CD4-positive, alpha-beta memory T cell (primary cell): ENCODE measurements at regions of chr13 and their contacts with region 1.

Region 1: GRCh38 chr13:29508130-29508875 is 87.2 kb downstream of the SLC7A1 start:
- DNase-seq: peak; percentile 52 to 65 (median 55)
- H3K4me3 ChIP-seq: no peak overlapping the region
- H3K4me3 Mint-ChIP-seq: no peak overlapping the region
- H3K27ac ChIP-seq: no peak overlapping the region
- H3K27ac Mint-ChIP-seq: peak overlapping the region in 1 of 7 donors; percentile 24
- H3K4me1 ChIP-seq: no peaks in the 10 kb centered on the region
- H3K4me1 Mint-ChIP-seq: peaks cover 0 to 4% (median 0%) of the 10 kb centered on the region in 4 donors
- H3K27me3 ChIP-seq: no peaks in the 10 kb centered on the region
- H3K27me3 Mint-ChIP-seq: peaks cover 0 to 6% of the 10 kb centered on the region in 2 donors

Region 2: DNA sequence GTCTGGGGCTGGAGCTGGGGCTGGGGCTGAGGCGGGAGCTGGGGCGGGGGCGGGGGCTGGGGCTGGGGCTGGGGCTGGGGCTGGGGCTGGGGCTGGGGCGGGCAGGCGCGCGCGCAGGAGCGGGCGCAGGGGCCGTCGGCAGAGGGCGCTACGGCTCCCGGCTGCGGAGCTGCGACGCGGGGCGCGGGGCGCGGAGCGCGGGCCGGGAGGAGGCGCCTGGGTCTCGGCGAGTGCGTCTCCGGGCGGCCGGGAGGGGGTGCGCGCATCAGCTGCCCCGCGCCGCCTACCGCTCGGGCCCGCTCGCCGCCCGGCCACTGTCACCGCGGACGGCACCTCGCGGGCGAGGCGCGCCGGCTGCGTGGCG is 688.6 kb before region 1 on chr13:
- CTCF ChIA-PET with region 1: no interaction called
- POLR2A ChIA-PET with region 1: no interaction called
- intact Hi-C with region 1: no loop called
- DNase-seq: peak in 4 of 5 donors; percentile 45 to 60 (median 50)
- H3K4me3 ChIP-seq: no peak overlapping the region
- H3K4me3 Mint-ChIP-seq: no peak overlapping the region
- H3K27ac ChIP-seq: no peak overlapping the region
- H3K27ac Mint-ChIP-seq: no peak overlapping the region
- H3K4me1 ChIP-seq: peaks cover 5% of the 10 kb centered on the region
- H3K4me1 Mint-ChIP-seq: peaks cover 2 to 7% (median 4%) of the 10 kb centered on the region in 4 donors
- H3K27me3 ChIP-seq: peaks cover 17% of the 10 kb centered on the region
- H3K27me3 Mint-ChIP-seq: peaks cover 36 to 43% of the 10 kb centered on the region in 2 donors

Region 3: GRCh38 chr13:29448174-29448573 is 60.1 kb before region 1 on chr13:
- CTCF ChIA-PET with region 1: no interaction called
- POLR2A ChIA-PET with region 1: no interaction called
- intact Hi-C with region 1: no loop called
- DNase-seq: no peak
- H3K4me3 ChIP-seq: no peak overlapping the region
- H3K4me3 Mint-ChIP-seq: no peak overlapping the region
- H3K27ac ChIP-seq: no peak overlapping the region
- H3K27ac Mint-ChIP-seq: no peak overlapping the region
- H3K4me1 ChIP-seq: no peaks in the 10 kb centered on the region
- H3K4me1 Mint-ChIP-seq: no peaks in the 10 kb centered on the region
- H3K27me3 ChIP-seq: no peaks in the 10 kb centered on the region
- H3K27me3 Mint-ChIP-seq: peaks cover 6 to 16% of the 10 kb centered on the region in 2 donors

Region 4: GRCh38 chr13:29496240-29496712 is 12.0 kb before region 1 on chr13:
- CTCF ChIA-PET with region 1: interaction called, 27 read pairs
- POLR2A ChIA-PET with region 1: no interaction called
- intact Hi-C with region 1: no loop called
- DNase-seq: no peak
- H3K4me3 ChIP-seq: no peak overlapping the region
- H3K4me3 Mint-ChIP-seq: no peak overlapping the region
- H3K27ac ChIP-seq: no peak overlapping the region
- H3K27ac Mint-ChIP-seq: peak overlapping the region in 2 of 7 donors; percentile 5 to 87
- H3K4me1 ChIP-seq: no peaks in the 10 kb centered on the region
- H3K4me1 Mint-ChIP-seq: peaks cover 0 to 8% (median 7%) of the 10 kb centered on the region in 4 donors
- H3K27me3 ChIP-seq: no peaks in the 10 kb centered on the region
- H3K27me3 Mint-ChIP-seq: peaks cover 15 to 17% of the 10 kb centered on the region in 2 donors

Region 5: GRCh38 chr13:29564818-29565217 is 56.5 kb after region 1 on chr13:
- CTCF ChIA-PET with region 1: interaction called, 13 read pairs
- POLR2A ChIA-PET with region 1: no interaction called
- intact Hi-C with region 1: no loop called
- DNase-seq: no peak
- H3K4me3 ChIP-seq: no peak overlapping the region
- H3K4me3 Mint-ChIP-seq: no peak overlapping the region
- H3K27ac ChIP-seq: no peak overlapping the region
- H3K27ac Mint-ChIP-seq: peak overlapping the region in 4 of 7 donors; percentile 4 to 43 (median 24)
- H3K4me1 ChIP-seq: peaks cover 16% of the 10 kb centered on the region
- H3K4me1 Mint-ChIP-seq: peaks cover 28 to 72% (median 42%) of the 10 kb centered on the region in 4 donors
- H3K27me3 ChIP-seq: no peaks in the 10 kb centered on the region
- H3K27me3 Mint-ChIP-seq: no peaks in the 10 kb centered on the region

Region 6: DNA sequence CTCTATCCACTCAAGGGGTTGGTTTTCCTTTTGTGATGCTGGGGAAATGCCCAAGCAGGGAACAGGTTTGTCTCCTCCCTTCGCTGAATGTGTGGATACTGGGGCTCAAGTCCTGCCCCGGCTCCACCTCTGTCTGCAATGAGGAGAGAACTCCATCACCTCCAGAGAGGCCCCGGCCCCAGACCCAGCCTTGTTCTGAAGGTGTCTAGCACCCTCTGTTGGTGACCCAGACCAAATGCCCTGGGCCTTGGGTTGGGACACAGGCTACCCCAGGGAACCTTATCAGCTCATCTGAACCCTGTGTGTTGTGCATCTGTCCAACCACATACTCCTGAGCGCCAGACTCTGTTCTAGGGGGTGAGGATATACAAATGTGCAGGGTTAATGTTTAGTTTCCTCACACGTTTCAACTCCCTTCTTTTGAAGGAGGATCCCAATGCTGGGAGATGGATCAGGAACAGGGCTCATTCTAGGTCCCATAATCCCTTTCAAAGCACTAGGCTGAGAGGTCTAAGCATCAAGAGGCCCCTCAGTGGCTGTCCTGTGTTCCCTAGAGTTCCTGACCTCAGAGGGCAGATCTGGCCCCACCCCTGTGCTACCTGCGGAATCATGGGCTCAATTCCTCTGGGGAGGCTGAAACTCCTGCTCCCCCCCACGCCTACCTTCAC is 199.7 kb after region 1 on chr13:
- CTCF ChIA-PET with region 1: interaction called, 162 read pairs
- POLR2A ChIA-PET with region 1: interaction called, 4 read pairs
- intact Hi-C with region 1: loop called (anchors 1 kb)
- DNase-seq: peak in 4 of 5 donors; percentile 24 to 41 (median 30)
- H3K4me3 ChIP-seq: no peak overlapping the region
- H3K4me3 Mint-ChIP-seq: no peak overlapping the region
- H3K27ac ChIP-seq: no peak overlapping the region
- H3K27ac Mint-ChIP-seq: no peak overlapping the region
- H3K4me1 ChIP-seq: no peaks in the 10 kb centered on the region
- H3K4me1 Mint-ChIP-seq: peaks cover 0 to 4% (median 0%) of the 10 kb centered on the region in 4 donors
- H3K27me3 ChIP-seq: no peaks in the 10 kb centered on the region
- H3K27me3 Mint-ChIP-seq: peaks cover 12 to 17% of the 10 kb centered on the region in 2 donors

Region 7: GRCh38 chr13:29771247-29771646 is 262.9 kb after region 1 on chr13:
- CTCF ChIA-PET with region 1: interaction called, 11 read pairs
- POLR2A ChIA-PET with region 1: interaction called, 3 read pairs
- intact Hi-C with region 1: loop called (anchors 5 kb)
- DNase-seq: peak in 4 of 5 donors; percentile 49 to 54 (median 52)
- H3K4me3 ChIP-seq: no peak overlapping the region
- H3K4me3 Mint-ChIP-seq: no peak overlapping the region
- H3K27ac ChIP-seq: no peak overlapping the region
- H3K27ac Mint-ChIP-seq: no peak overlapping the region
- H3K4me1 ChIP-seq: no peaks in the 10 kb centered on the region
- H3K4me1 Mint-ChIP-seq: peaks cover 0 to 4% (median 3%) of the 10 kb centered on the region in 4 donors
- H3K27me3 ChIP-seq: no peaks in the 10 kb centered on the region
- H3K27me3 Mint-ChIP-seq: no peaks in the 10 kb centered on the region